Gastrocnemius medialis (tissue), 4 donors: ENCODE measurements at regions of chr4 and their contacts with region 1.

Region 1: GRCh38 chr4:169404960-169405359 is 134.2 kb upstream of the SH3RF1 start:
- DNase-seq: no peak
- ATAC-seq: no peak
- H3K4me3 ChIP-seq: no peak overlapping the region
- H3K27ac ChIP-seq: no peak overlapping the region
- H3K4me1 ChIP-seq: peaks cover 2 to 5% of the 10 kb centered on the region in 2 donors
- H3K27me3 ChIP-seq: no peaks in the 10 kb centered on the region
- CTCF ChIP-seq: no peak
- POLR2A ChIP-seq: no peak

Region 2: GRCh38 chr4:169024762-169025161 is 380.2 kb before region 1 on chr4:
- in situ Hi-C with region 1: no loop called
- intact Hi-C with region 1: loop called (anchors 10 kb)
- DNase-seq: no peak
- ATAC-seq: peak; percentile 50 to 76
- H3K4me3 ChIP-seq: no peak overlapping the region
- H3K27ac ChIP-seq: peak overlapping the region in 1 of 4 donors; percentile 23
- H3K4me1 ChIP-seq: no peaks in the 10 kb centered on the region
- H3K27me3 ChIP-seq: peaks cover 0 to 7% (median 0%) of the 10 kb centered on the region in 3 donors
- CTCF ChIP-seq: peak in 4 of 5 experiments; percentile 24 to 55 (median 42)
- POLR2A ChIP-seq: no peak